PC-9 (cell line): ENCODE measurements at regions of chr13 and their contacts with region 1.

Region 1: GRCh38 chr13:113398963-113399661 is 35.2 kb upstream of the GRTP1 start:
- DNase-seq: peak; percentile 36 to 45
- H3K4me3 ChIP-seq: no peak overlapping the region
- H3K27ac ChIP-seq: no peak overlapping the region
- H3K4me1 ChIP-seq: peaks cover 10% of the 10 kb centered on the region; the same call in 1 of the 2 replicates
- H3K27me3 ChIP-seq: peaks cover 13% of the 10 kb centered on the region; the same call in 1 of the 2 replicates
- CTCF ChIP-seq: no peak

Region 2: DNA sequence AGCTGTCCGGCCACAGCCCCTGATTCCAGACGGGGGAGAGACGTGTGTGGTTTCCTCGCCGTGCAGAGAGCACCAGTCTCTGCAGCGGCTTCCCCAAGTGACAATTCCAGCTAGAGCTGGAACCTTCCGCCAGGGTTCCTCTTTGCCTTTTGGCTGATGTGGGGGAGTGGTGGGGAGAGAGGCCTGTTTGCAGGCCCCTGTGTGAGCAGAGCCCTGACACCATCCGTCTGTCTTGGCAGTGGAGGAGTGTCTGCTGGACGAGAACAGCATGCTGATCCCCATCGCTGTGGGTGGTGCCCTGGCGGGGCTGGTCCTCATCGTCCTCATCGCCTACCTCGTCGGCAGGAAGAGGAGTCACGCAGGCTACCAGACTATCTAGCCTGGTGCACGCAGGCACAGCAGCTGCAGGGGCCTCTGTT is 77.1 kb before region 1 on chr13:
- CTCF ChIA-PET with region 1: interaction called, 11 read pairs
- POLR2A ChIA-PET with region 1: no interaction called
- intact Hi-C with region 1: no loop called
- DNase-seq: no peak
- H3K4me3 ChIP-seq: no peak overlapping the region
- H3K27ac ChIP-seq: no peak overlapping the region
- H3K4me1 ChIP-seq: no peaks in the 10 kb centered on the region
- H3K27me3 ChIP-seq: no peaks in the 10 kb centered on the region
- CTCF ChIP-seq: no peak